ENCODE measurements at regions of chr17 and their contacts with region 1.

Region 1: GRCh38 chr17:77096570-77097214 is 44.1 kb upstream of the SEC14L1 start:
- DNase-seq: no peak
- ATAC-seq: peak; percentile 57

Region 2: GRCh38 chr17:77163001-77163400 is 66.3 kb after region 1 on chr17:
- intact Hi-C with region 1: loop called (anchors 2 kb)
- DNase-seq: no peak
- ATAC-seq: peak; percentile 41

Region 3: GRCh38 chr17:77208217-77208808 is 111.6 kb after region 1 on chr17:
- intact Hi-C with region 1: loop called (anchors 2 kb)
- DNase-seq: no peak
- ATAC-seq: peak; percentile 71